ENCODE measurements at regions of chr2 and their contacts with region 1.

Region 1: GRCh38 chr2:207710814-207711740 is at the start of gene CCNYL1:
- DNase-seq: peak; percentile 98 to 99
- H3K4me3 ChIP-seq: peak within 1 kb of the TSS; percentile 86 to 97 (median 87)
- H3K27ac ChIP-seq: peak within 1 kb of the TSS; percentile 70 to 93
- H3K4me1 ChIP-seq: no peaks in the 10 kb centered on the region
- H3K27me3 ChIP-seq: no peaks in the 10 kb centered on the region
- CTCF ChIP-seq: peak; percentile 18 to 54 (median 42)
- POLR2A ChIP-seq: peak; percentile 19
- total RNA-seq, gene CCNYL1: 10.0 to 17.4 (median 11.8) TPM

Region 2: GRCh38 chr2:207529330-207530159 is 181.5 kb before region 1 on chr2 and contains the start of gene CREB1:
- intact Hi-C with region 1: loop called (anchors 10 kb)
- DNase-seq: peak; percentile 98
- H3K4me3 ChIP-seq: peak within 1 kb of the TSS; percentile 67 to 82 (median 72)
- H3K27ac ChIP-seq: peak within 1 kb of the TSS; percentile 98
- H3K4me1 ChIP-seq: no peaks in the 10 kb centered on the region
- H3K27me3 ChIP-seq: no peaks in the 10 kb centered on the region
- CTCF ChIP-seq: peak in 1 of 3 donors; percentile 25
- POLR2A ChIP-seq: peak; percentile 90
- total RNA-seq, gene CREB1: 45.6 to 81.5 (median 54.1) TPM

Region 3: GRCh38 chr2:207765547-207765946 is 54.5 kb after region 1 on chr2:
- intact Hi-C with region 1: loop called (anchors 2 kb)
- DNase-seq: no peak
- H3K4me3 ChIP-seq: no peak overlapping the region
- H3K27ac ChIP-seq: no peak overlapping the region
- H3K4me1 ChIP-seq: peaks cover 0 to 3% of the 10 kb centered on the region in 2 donors
- H3K27me3 ChIP-seq: no peaks in the 10 kb centered on the region
- CTCF ChIP-seq: no peak
- POLR2A ChIP-seq: no peak

Region 4: DNA sequence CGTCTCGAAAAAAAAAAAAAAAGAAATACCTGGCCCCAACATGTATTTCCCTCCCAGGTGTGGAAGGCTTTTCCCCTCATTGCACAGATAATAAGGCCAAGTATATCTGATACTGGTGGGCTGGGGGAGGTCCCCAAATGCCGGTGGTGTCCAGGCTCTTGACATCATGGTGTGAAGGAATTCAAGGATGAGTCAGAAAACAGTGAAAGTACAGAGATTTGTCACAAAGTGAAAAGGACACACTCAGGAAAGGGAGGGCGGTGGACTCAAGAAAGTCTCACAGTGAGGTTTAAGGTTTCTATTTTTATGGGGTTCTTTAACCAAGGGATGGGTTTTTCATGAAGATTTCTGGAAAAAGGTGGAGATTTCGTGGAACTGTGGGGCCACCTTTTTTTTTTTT is 96.4 kb after region 1 on chr2:
- intact Hi-C with region 1: no loop called
- DNase-seq: no peak
- H3K4me3 ChIP-seq: no peak overlapping the region
- H3K27ac ChIP-seq: no peak overlapping the region
- H3K4me1 ChIP-seq: no peaks in the 10 kb centered on the region
- H3K27me3 ChIP-seq: no peaks in the 10 kb centered on the region
- CTCF ChIP-seq: no peak
- POLR2A ChIP-seq: no peak